ENCODE measurements at regions of chr2 and their contacts with region 1.

Region 1: GRCh38 chr2:61193670-61194571 is 31.9 kb downstream of the C2orf74 start:
- DNase-seq: no peak
- H3K4me3 ChIP-seq: no peak overlapping the region
- H3K27ac ChIP-seq: no peak overlapping the region
- H3K4me1 ChIP-seq: peaks cover 2% of the 10 kb centered on the region
- H3K27me3 ChIP-seq: no peaks in the 10 kb centered on the region
- CTCF ChIP-seq: no peak
- EP300 ChIP-seq: no peak
- POLR2A ChIP-seq: no peak

Region 2: DNA sequence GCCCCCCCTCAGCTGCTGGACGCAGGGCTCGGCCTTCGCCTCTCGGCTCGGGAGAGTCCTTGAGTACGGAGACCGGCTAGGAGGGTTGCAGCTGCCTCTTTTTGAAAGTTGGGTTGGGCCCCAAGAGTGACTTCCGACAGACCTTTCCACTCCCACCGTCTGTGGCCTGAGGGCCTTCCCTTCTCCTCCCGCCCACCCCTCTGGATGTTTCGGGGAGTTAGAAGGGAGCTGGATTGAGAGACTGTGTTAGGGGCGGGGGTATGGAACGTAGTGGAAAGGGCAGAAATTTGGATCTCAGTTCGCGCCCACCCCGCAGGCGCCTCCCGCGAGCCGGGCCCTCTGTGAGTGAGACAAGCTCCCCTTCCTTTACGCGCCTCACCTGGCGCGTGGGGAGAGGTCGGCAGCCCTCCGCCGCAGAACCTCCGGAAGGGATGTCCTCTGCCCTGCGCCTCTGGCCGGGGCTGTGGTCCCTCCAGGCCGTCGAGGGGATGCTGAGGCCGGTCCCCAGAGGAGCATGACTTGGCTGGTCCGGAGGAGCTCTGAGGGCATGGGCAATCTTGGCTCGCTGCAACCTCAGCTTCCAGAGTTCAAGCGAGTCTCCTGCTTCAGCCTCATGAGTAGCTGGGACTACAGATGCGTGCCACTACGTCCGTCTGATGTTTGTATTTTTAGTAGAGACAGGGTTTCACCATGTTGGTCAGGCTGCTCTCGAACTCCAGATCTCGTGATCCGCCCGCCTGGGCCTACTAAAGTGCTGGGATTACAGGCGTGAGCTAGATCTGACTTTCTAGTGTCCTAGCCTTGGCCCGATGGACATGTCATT is 16.0 kb before region 1 on chr2:
- intact Hi-C with region 1: loop called in 1 of 4 experiments (anchors 1 kb)
- DNase-seq: peak in 2 of 5 donors; percentile 56 to 68
- H3K4me3 ChIP-seq: peak overlapping the region; percentile 89
- H3K27ac ChIP-seq: peak overlapping the region; percentile 90 to 94
- H3K4me1 ChIP-seq: peaks cover 30% of the 10 kb centered on the region
- H3K27me3 ChIP-seq: no peaks in the 10 kb centered on the region
- CTCF ChIP-seq: no peak
- EP300 ChIP-seq: no peak
- POLR2A ChIP-seq: no peak